AG04449 (cell line): ENCODE measurements at regions of chr14 and their contacts with region 1.

Region 1: DNA sequence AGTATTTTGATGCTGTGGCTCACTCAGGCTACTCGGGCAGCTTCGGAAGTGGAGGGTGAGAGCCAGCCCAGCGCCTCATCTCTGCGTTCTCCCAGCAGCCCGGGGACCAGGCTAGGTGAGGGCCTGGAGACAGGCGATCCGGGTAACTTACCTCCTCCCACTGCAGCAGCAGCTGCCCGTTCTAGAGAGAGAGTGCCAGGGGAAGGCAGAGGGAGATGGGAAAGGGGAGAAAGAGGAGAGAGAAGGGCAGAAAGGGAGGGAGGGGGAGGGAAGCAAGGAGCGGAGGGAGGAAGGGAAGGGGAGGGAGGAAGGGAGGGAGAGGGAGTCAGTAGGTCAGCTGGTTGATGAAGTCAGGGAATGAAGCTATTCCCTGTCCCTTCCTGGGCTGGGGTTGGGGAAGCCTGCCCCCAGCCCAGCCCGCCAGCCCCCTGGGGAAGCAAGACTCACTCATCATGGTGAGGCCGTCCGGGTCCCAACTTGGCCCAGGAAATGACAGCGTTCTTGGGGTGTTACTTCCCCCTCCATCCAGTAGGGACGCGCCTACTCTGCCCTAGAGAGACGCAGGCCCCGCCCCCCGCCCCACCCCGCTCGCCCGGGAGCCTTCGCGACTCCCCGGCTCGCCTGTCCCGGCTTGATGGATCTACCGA is at the start of gene IFI27L2:
- DNase-seq: no peak
- H3K4me3 ChIP-seq: peak within 1 kb of the TSS; percentile 73
- CTCF ChIP-seq: peak; percentile 29

Region 2: DNA sequence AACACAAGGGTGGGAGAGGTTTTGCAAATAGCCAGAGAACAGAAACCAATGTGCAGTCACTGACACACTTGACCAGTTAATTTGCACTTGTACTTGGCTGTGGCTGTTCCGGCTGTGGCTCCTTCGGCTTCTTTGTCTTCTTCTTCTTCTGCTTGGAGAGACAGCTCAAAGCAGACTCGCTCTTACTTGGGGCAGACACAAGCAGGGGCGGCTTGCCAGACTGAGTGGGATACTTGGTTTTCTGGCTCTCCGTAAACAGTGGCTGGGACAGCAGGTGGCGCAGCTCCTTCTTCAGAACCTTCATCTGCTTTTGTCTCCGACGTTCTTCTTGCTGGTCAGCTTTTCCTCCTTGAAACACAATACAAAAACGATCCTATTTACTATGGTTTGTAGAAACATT is 78.1 kb before region 1 on chr14:
- CTCF ChIA-PET with region 1: interaction called, 143 read pairs
- POLR2A ChIA-PET with region 1: no interaction called
- DNase-seq: no peak
- H3K4me3 ChIP-seq: no peak overlapping the region
- CTCF ChIP-seq: peak; percentile 56

Region 3: GRCh38 chr14:94100847-94101246 is 28.4 kb before region 1 on chr14:
- CTCF ChIA-PET with region 1: interaction called, 12 read pairs
- POLR2A ChIA-PET with region 1: interaction called, 3 read pairs
- DNase-seq: peak; percentile 45
- H3K4me3 ChIP-seq: no peak overlapping the region
- CTCF ChIP-seq: no peak

Region 4: DNA sequence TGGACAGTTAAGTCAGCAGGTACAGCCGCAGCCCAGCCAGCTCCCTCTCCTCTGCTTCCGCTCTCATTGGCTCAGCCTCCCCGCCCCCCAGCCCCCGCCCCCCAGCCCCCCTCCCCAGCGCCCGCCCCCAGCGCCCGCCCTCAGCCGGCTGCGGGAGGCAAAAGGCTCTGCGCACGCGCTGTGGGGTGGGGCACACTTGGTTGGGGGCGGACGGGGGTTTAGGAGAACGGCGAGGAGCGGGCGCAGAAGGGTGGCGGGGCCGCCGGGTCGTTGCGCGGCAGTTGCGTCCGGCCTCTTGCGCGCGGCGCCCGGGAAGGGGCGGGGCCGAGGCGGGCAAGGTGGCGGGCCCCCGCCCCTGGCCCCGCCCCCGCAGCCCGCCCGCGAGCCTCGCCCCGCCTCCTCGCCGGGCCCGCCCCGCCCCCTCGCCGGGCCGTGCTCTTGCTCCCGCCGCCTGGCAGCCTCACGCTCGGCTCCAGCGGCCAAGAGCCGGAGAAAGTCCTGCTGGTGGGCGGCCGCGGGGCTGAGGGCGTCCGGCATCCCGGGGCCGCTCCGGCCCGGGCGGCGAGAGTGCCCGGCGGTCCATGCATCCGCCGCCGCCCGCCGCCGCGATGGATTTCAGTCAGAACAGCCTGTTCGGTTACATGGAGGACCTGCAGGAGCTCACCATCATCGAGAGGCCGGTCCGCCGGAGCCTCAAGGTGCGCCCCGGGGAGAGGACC is 44.8 kb after region 1 on chr14 and contains the start of gene PPP4R4:
- CTCF ChIA-PET with region 1: interaction called, 39 read pairs
- POLR2A ChIA-PET with region 1: no interaction called
- DNase-seq: no peak
- H3K4me3 ChIP-seq: peak within 1 kb of the TSS; percentile 67
- CTCF ChIP-seq: no peak

Region 5: DNA sequence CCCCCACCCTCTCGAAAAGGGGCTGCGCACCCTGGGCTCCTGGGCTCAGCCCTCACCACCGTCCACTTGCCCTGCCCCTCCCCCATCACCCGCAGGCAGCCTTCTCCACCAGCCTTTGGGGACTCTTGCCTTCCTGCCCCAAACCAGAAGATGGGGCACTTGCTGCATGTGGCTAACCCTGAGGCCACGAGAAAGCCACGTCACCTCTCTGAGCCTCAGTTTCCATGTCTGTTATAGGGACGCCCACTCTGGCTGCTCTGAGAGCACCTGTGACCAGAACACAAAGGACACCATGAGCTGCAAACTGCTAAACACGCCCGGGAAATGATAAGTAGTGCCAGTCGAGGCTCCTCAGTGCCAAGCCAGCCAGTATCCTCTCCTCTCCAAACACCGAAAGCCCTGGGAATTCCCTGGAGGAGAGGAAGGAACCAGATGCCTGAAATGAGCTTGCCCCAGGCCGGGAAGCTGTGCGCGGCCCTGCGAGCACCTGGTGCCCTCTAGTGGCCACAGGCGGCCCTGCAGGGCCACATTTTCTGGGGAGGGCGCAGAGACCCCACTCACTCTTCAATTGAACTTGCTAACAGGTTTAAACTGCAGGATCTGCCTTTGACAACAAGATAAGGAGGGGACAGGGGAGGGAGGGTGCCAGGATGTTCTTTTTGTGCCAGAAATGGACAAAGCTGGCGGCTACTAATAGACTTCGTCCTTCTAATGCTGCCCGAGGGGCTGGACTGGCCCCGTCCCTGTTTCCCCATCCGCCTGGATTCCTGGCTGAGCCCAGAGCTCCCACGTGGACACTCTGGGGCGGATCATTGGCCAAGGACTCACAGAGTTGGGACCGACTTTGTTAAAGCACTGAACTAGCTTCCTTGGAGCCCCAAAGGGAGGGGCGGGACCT is 357.0 kb after region 1 on chr14:
- CTCF ChIA-PET with region 1: interaction called, 26 read pairs
- POLR2A ChIA-PET with region 1: no interaction called
- DNase-seq: no peak
- H3K4me3 ChIP-seq: no peak overlapping the region; the same call in 1 of the 2 replicates
- CTCF ChIP-seq: peak; percentile 98